ENCODE measurements at regions of chr14 and their contacts with region 1.

Region 1: DNA sequence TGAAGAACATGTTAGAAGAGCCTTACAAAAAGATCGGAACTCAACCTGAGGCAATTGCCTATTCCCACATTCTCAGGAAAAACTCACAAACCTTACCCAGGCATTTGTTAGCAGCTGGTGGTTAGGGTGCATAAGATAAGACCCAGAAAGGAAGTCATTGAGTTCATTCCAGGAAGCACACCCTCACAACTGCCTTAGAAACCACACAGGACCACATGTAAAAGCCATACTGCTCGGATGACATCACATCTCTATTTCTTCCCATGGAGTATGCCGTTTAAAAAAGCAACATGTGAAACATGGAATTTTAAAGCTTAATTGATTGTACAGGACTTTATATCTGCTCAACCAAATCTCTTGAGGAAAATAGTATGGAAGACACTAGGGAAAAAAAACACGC is 411.2 kb downstream of the DAD1 start:
- DNase-seq: no peak
- ATAC-seq: peak; percentile 65
- H3K4me3 ChIP-seq: no peak overlapping the region
- H3K27ac ChIP-seq: no peak overlapping the region
- H3K4me1 ChIP-seq: peaks cover 18% of the 10 kb centered on the region; the same call in 1 of the 2 replicates
- H3K27me3 ChIP-seq: no peaks in the 10 kb centered on the region; a peak in 1 of 4 replicates
- CTCF ChIP-seq: no peak
- EP300 ChIP-seq: no peak
- POLR2A ChIP-seq: no peak
- RAD21 ChIP-seq: no peak

Region 2: GRCh38 chr14:21852061-21852664 is 325.7 kb before region 1 on chr14:
- CTCF ChIA-PET with region 1: no interaction called
- POLR2A ChIA-PET with region 1: no interaction called
- RAD21 ChIA-PET with region 1: no interaction called
- SMC1A ChIA-PET with region 1: no interaction called
- in situ Hi-C with region 1: no loop called
- intact Hi-C with region 1: no loop called
- DNase-seq: no peak
- ATAC-seq: peak; percentile 74
- H3K4me3 ChIP-seq: no peak overlapping the region
- H3K27ac ChIP-seq: no peak overlapping the region
- H3K4me1 ChIP-seq: no peaks in the 10 kb centered on the region
- H3K27me3 ChIP-seq: no peaks in the 10 kb centered on the region
- CTCF ChIP-seq: peak; percentile 56 to 83 (median 80)
- EP300 ChIP-seq: no peak
- POLR2A ChIP-seq: no peak
- RAD21 ChIP-seq: no peak

Region 3: GRCh38 chr14:22163051-22163450 is 14.8 kb before region 1 on chr14:
- CTCF ChIA-PET with region 1: interaction called, 13 read pairs
- POLR2A ChIA-PET with region 1: no interaction called
- RAD21 ChIA-PET with region 1: interaction called, 6 read pairs
- SMC1A ChIA-PET with region 1: interaction called, 10 read pairs
- in situ Hi-C with region 1: no loop called
- intact Hi-C with region 1: no loop called
- DNase-seq: no peak
- ATAC-seq: peak; percentile 64
- H3K4me3 ChIP-seq: no peak overlapping the region
- H3K27ac ChIP-seq: no peak overlapping the region
- H3K4me1 ChIP-seq: no peaks in the 10 kb centered on the region
- H3K27me3 ChIP-seq: peaks cover 2% of the 10 kb centered on the region in 2 experiments; a peak in 2 of 4 replicates
- CTCF ChIP-seq: peak in 2 of 3 experiments; percentile 3 to 28; a peak in 3 of 6 replicates
- EP300 ChIP-seq: no peak
- POLR2A ChIP-seq: no peak
- RAD21 ChIP-seq: peak; percentile 40

Measured in GM12878 (cell line).